Uterus (tissue), 4 donors: ENCODE measurements at regions of chr1 and their contacts with region 1.

Region 1: DNA sequence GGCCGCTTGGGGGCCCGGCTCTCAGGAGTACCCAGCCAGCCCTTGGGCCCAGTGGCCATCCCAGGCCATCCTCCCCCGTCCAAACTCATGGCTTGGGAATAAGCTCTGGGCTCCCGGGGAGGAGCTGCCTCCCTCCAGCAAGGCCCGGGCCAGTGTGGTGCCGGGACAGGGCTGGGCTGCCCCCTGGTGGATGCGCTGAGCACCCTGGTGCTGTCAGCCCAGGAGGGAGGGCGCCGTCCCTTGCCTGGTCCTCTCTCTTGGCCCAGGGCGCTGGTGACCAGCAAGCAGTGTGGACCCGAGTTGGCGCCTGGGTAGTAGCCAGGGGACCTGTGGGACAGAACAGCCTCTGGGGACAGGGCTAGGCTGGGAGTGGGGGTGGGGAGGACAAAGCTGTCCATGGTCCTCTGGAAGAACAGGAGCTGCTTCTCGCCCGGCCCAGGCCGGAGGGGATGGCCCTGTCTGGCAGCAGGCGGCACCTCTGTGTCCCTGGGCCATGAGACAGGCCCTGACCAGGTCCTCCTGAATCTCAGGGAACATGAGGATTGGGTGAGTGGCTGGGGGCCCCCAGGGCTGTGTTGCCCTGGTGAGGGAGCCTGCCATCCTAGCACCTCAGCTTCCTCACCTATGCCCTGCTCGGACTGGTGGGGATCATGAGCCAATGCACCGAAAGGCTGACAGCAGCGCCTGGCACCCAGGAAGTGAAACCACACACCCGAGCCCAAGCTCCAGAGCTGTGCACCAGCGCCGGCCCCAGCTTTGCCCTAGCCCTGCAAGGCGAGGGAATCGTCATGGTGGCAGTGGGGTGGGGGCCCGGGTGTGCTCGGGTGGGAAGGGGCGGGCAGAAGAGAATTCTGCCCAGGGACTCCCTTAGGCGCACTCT is 9.4 kb downstream of the MORN1 start:
- DNase-seq: peak; percentile 82 to 88
- H3K4me3 ChIP-seq: no peak overlapping the region
- H3K27ac ChIP-seq: peak overlapping the region; percentile 55 to 57
- H3K4me1 ChIP-seq: peaks cover 4 to 9% of the 10 kb centered on the region in 2 donors
- H3K27me3 ChIP-seq: no peaks in the 10 kb centered on the region
- CTCF ChIP-seq: peak; percentile 90 to 99 (median 98)
- POLR2A ChIP-seq: no peak

Region 2: DNA sequence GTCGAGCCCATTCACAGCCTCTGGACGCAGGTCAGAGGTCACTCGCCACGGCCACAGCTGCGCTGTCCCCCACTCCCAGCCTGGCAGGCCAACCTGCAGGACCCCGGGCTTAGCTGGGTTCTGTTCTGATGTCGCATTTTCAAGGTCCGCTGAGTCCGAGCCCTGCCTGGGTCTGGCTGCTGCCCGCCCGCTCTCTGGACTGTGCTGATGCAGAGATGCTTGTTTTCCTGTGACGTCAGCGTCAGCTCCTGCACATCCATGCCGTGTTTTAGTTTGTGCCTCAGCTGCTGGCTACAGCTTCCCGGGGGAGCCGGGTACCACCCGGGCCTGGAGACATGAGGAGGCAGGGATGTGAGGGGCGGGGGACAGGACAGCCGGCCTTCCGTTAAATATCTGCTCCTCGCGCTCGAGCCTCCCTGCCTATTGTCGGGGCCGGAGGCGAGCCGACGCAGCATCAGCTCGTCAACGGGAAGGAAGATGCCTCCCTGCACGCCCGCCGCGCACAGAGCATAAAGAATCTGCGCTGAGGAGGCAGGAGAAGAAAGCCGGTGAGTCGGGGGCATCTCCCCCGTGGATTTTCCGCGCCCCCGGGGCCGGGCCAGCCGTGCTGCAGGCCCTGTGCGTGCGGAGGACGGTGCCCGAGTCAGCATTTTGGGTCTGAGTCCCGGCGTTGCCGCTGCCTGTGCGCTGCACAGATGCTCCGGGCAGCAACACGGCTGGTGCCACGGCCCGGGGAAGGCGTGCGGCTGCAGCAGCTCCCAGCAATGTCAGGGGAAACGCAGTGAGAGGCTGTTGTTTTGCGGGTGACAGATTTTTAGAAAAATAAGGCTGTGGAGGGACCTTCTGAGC is 308.4 kb before region 1 on chr1:
- intact Hi-C with region 1: no loop called
- DNase-seq: no peak
- H3K4me3 ChIP-seq: peak overlapping the region in 1 of 2 donors; percentile 23
- H3K27ac ChIP-seq: no peak overlapping the region
- H3K4me1 ChIP-seq: peaks cover 0 to 5% of the 10 kb centered on the region in 2 donors
- H3K27me3 ChIP-seq: peaks cover 0 to 4% of the 10 kb centered on the region in 2 donors
- CTCF ChIP-seq: no peak
- POLR2A ChIP-seq: no peak

Region 3: DNA sequence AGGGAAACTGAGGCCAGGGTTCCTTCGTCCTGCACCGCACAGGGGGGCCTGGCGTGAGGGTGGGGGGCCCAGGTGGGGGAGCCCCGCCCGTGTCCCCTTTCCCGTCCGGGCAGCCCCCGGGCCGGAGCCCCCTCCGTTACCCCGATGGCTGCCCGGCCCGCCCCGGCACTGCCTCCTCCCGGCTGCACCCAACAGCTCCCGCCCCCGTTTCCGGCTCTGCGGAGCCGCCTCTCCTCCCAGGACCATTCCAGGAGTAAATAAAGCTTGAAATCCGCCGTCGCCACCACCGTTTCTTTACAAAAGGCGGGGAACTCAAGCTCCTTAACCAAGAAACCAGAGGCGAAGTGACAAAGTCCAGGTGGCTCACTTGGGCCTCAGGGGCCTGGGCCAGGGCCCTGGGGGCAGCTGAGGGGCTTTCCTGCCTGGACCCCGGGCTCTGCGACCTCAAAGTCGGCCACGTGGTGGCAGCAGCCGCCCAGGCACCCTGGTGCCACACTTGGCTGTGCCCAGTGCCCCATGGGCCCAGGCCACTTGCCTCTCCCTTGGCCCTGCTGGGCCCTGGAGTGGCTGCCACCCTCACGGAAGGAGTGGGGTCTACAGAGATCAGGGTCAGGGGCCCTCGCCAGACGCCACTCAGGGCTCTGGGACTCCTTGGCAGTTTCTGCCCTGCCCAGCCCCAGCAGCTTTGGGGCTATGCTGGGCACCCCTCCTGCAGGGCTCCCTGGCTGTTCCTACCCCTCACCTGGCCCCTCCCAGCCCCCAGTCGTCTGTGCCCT is 186.9 kb before region 1 on chr1:
- intact Hi-C with region 1: loop called (anchors 2 kb)
- DNase-seq: peak; percentile 90 to 91
- H3K4me3 ChIP-seq: peak overlapping the region; percentile 67 to 69
- H3K27ac ChIP-seq: peak overlapping the region; percentile 94 to 96
- H3K4me1 ChIP-seq: peaks cover 0 to 29% of the 10 kb centered on the region in 2 donors
- H3K27me3 ChIP-seq: no peaks in the 10 kb centered on the region
- CTCF ChIP-seq: peak; percentile 97 to 99 (median 99)
- POLR2A ChIP-seq: peak; percentile 26 to 28

Region 4: GRCh38 chr1:2314803-2315673 is 66.9 kb before region 1 on chr1:
- intact Hi-C with region 1: loop called (anchors 10 kb)
- DNase-seq: peak; percentile 71 to 73
- H3K4me3 ChIP-seq: peak overlapping the region; percentile 30 to 61
- H3K27ac ChIP-seq: peak overlapping the region; percentile 86 to 93
- H3K4me1 ChIP-seq: peaks cover 0 to 47% of the 10 kb centered on the region in 2 donors
- H3K27me3 ChIP-seq: no peaks in the 10 kb centered on the region
- CTCF ChIP-seq: peak; percentile 65 to 100 (median 87)
- POLR2A ChIP-seq: no peak

Region 5: GRCh38 chr1:2330511-2331199 is 51.3 kb before region 1 on chr1:
- intact Hi-C with region 1: no loop called
- DNase-seq: peak; percentile 73 to 88
- H3K4me3 ChIP-seq: no peak overlapping the region
- H3K27ac ChIP-seq: peak overlapping the region; percentile 33 to 67
- H3K4me1 ChIP-seq: no peaks in the 10 kb centered on the region
- H3K27me3 ChIP-seq: no peaks in the 10 kb centered on the region
- CTCF ChIP-seq: no peak
- POLR2A ChIP-seq: peak in 1 of 2 donors; percentile 9

Region 6: GRCh38 chr1:2594001-2594640 is 212.1 kb after region 1 on chr1:
- intact Hi-C with region 1: no loop called
- DNase-seq: peak; percentile 37 to 52
- H3K4me3 ChIP-seq: peak overlapping the region in 1 of 2 donors; percentile 11
- H3K27ac ChIP-seq: no peak overlapping the region
- H3K4me1 ChIP-seq: no peaks in the 10 kb centered on the region
- H3K27me3 ChIP-seq: no peaks in the 10 kb centered on the region
- CTCF ChIP-seq: no peak
- POLR2A ChIP-seq: no peak